A673 (cell line): ENCODE measurements at regions of chr2 and their contacts with region 1.

Region 1: DNA sequence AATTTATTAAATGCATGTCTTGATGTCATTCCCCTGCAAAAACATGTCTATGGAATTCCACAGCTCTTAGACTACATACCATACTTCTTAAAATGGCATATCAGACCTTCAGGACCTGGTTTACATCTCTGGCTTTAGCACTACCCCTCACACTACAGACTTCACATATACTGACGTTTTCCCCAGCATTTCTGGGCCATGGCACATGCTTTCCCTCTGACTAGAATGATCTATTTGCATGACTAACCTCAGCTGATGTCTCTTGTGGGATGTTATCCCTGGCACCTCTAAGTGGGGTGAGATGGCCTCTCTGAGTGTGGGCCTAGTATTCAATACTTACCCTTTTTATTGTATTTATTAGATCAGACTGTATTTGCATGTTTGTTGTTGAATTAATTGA is 381.6 kb downstream of the ERBB4 start:
- DNase-seq: no peak
- H3K4me3 ChIP-seq: no peak overlapping the region
- H3K27ac ChIP-seq: no peak overlapping the region
- H3K4me1 ChIP-seq: peaks cover 36% of the 10 kb centered on the region
- H3K27me3 ChIP-seq: no peaks in the 10 kb centered on the region
- CTCF ChIP-seq: no peak

Region 2: DNA sequence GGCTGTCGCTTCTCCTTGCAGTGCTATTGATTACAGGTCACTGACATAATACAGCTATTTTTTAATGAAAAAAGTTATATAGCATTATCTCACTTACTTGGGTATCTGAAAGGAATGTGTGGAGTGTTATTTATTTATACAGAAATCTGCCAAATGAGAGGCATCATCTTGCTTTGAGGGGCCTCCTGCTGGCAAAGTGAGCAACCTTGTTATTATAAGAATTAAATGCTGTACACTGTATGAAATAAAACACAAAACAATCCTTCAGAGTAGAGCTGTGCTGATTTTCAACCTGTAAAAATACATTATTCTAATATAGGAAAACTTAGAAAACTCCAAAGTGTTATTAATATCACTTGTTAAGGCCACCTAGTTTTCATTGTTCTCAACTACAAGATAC is 360.7 kb after region 1 on chr2:
- CTCF ChIA-PET with region 1: no interaction called
- POLR2A ChIA-PET with region 1: no interaction called
- intact Hi-C with region 1: loop called (anchors 5 kb)
- DNase-seq: no peak
- H3K4me3 ChIP-seq: no peak overlapping the region
- H3K27ac ChIP-seq: no peak overlapping the region
- H3K4me1 ChIP-seq: peaks cover 17% of the 10 kb centered on the region
- H3K27me3 ChIP-seq: no peaks in the 10 kb centered on the region
- CTCF ChIP-seq: no peak; the same call in 1 of the 2 replicates